ENCODE measurements at regions of chr6 and their contacts with region 1.

Region 1: GRCh38 chr6:45009576-45009975 is 318.6 kb upstream of the RUNX2 start:
- DNase-seq: no peak
- H3K4me3 Mint-ChIP-seq: no peak overlapping the region
- H3K27ac Mint-ChIP-seq: peak overlapping the region; percentile 66
- H3K4me1 Mint-ChIP-seq: peaks cover 25% of the 10 kb centered on the region
- H3K27me3 Mint-ChIP-seq: no peaks in the 10 kb centered on the region

Region 2: GRCh38 chr6:44976719-44977641 is 32.6 kb before region 1 on chr6:
- CTCF ChIA-PET with region 1: interaction called, 4 read pairs
- POLR2A ChIA-PET with region 1: no interaction called
- intact Hi-C with region 1: loop called (anchors 2 kb)
- DNase-seq: no peak
- H3K4me3 Mint-ChIP-seq: no peak overlapping the region
- H3K27ac Mint-ChIP-seq: peak overlapping the region; percentile 33
- H3K4me1 Mint-ChIP-seq: peaks cover 39% of the 10 kb centered on the region
- H3K27me3 Mint-ChIP-seq: no peaks in the 10 kb centered on the region

Measured in activated CD4-positive, alpha-beta memory T cell treated with anti-CD3 and anti-CD28 coated beads for 36 hours (primary cell).